ENCODE measurements at regions of chr2 and their contacts with region 1.

Region 1: GRCh38 chr2:95022309-95023221 is 2.9 kb upstream of the MAL start:
- DNase-seq: peak; percentile 78 to 92 (median 84)
- ATAC-seq: peak; percentile 71
- H3K4me3 ChIP-seq: no peak overlapping the region
- H3K4me3 Mint-ChIP-seq: peak overlapping the region; percentile 84
- H3K27ac ChIP-seq: no peak overlapping the region
- H3K27ac Mint-ChIP-seq: peak overlapping the region; percentile 77
- H3K4me1 ChIP-seq: peaks cover 50% of the 10 kb centered on the region
- H3K4me1 Mint-ChIP-seq: peaks cover 50% of the 10 kb centered on the region
- H3K27me3 ChIP-seq: no peaks in the 10 kb centered on the region
- H3K27me3 Mint-ChIP-seq: no peaks in the 10 kb centered on the region
- CTCF ChIP-seq: peak; percentile 90

Region 2: DNA sequence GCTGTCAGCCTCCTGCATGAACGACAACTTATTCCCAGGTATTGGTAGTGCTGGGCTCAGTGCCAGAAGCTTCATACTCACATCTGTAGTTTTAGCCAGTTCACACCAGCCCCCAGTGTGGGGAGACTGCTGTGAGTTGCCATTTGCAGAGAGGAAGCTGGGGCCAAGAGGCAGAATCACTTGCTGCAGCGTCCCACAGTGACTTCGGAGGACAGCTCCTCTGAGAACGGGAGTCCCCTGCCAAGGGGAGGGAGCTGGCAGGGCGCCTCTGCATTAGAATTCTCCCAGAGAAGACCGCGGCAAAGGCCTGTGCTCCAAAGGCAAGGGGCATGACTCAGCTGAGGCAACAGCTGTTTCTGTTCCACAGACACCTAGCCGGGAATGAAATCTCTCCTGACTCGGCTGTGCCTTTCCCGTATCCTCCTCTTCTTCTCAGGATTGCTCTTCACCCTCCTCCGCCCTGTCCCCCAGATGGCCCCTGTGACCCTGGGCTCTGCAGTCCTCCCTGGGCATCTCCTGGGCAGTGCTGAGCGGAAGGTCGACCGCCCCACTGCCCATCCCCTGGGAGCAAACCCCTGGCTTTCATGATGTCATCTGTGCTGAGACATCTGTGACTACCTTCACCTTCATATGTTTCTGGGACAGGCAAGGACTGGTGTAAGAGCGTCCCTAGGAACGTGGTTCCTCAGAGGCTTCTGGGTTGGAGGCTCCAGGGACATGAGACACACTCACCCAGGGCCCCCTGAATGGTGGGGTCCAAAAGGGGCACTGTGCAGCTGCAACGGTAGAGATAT is 20.9 kb after region 1 on chr2:
- CTCF ChIA-PET with region 1: interaction called, 9 read pairs
- POLR2A ChIA-PET with region 1: interaction called, 22 read pairs
- intact Hi-C with region 1: no loop called
- DNase-seq: peak in 2 of 14 experiments; percentile 23 to 32
- ATAC-seq: peak; percentile 51
- H3K4me3 ChIP-seq: no peak overlapping the region
- H3K4me3 Mint-ChIP-seq: no peak overlapping the region
- H3K27ac ChIP-seq: peak overlapping the region in 1 of 2 donors; percentile 14
- H3K27ac Mint-ChIP-seq: peak overlapping the region; percentile 71
- H3K4me1 ChIP-seq: peaks cover 63% of the 10 kb centered on the region
- H3K4me1 Mint-ChIP-seq: peaks cover 84% of the 10 kb centered on the region
- H3K27me3 ChIP-seq: no peaks in the 10 kb centered on the region
- H3K27me3 Mint-ChIP-seq: no peaks in the 10 kb centered on the region
- CTCF ChIP-seq: no peak

Region 3: DNA sequence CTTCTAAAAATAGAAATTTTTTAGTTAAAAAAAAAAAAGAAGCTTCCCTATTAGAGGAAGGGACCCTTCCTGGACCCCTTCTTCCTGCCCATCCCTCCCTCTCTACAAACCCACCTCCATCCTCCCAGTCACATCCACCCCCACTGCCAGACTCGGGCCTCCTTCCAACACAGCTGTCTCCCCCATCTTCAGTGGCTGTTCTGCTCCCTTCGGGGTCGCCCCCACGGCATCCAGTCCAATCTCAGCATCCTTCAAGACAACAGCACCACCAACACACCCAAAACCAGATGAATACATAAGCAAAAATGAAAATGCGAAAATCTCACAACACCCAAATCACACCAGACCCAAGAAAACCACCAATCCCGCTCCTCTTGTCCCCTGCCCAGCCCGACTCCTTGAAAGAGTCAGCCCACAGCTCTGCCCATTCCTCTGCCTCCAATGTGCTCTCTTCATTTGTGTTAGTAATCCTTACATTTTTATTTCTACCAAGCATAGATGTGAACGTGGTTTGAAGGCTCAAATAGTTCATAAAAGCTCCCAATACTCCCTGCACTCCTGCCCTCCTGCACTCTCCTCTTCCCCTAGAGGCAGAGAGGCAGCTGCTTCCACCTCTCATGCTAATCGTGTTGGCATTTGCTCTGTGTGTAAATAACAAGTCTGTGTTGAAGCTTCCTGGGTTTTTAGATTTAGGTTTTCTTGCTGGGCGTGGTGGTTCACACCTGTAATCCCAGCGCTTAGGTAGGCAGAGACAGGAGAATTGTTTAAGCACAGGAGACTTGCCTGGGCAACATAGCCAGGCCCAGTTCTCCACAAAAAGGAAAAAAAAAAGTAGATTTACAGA is 39.9 kb after region 1 on chr2:
- CTCF ChIA-PET with region 1: interaction called, 26 read pairs
- POLR2A ChIA-PET with region 1: interaction called, 77 read pairs
- intact Hi-C with region 1: loop called in 1 of 2 experiments (anchors 5 kb)
- DNase-seq: peak in 2 of 14 experiments; percentile 31 to 33
- ATAC-seq: peak; percentile 47
- H3K4me3 ChIP-seq: no peak overlapping the region
- H3K4me3 Mint-ChIP-seq: peak overlapping the region; percentile 56
- H3K27ac ChIP-seq: no peak overlapping the region
- H3K27ac Mint-ChIP-seq: peak overlapping the region; percentile 80
- H3K4me1 ChIP-seq: peaks cover 36% of the 10 kb centered on the region
- H3K4me1 Mint-ChIP-seq: peaks cover 42% of the 10 kb centered on the region
- H3K27me3 ChIP-seq: no peaks in the 10 kb centered on the region
- H3K27me3 Mint-ChIP-seq: no peaks in the 10 kb centered on the region
- CTCF ChIP-seq: no peak

Region 4: DNA sequence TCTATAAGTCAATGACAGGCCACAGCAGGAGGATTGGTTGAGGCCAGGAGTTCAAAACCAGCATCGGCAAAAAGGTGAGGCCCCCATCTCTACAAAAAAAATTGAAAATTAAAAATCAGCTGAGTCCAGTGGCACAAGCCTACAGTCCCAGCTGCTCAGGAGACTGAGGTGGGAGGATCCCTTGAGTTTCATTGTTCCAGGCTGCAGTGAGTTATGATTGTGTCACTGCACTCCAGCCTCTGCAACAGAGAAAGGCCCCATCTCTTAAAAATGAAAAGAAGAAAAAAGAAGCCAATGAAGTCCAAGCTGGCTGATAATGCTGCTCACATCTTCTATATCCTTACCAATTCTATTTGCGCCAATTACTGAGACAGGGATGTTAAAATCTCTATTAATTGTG is 59.9 kb after region 1 on chr2:
- CTCF ChIA-PET with region 1: interaction called, 223 read pairs
- POLR2A ChIA-PET with region 1: interaction called, 749 read pairs
- intact Hi-C with region 1: loop called (anchors 1 kb)
- DNase-seq: no peak
- ATAC-seq: no peak
- H3K4me3 ChIP-seq: no peak overlapping the region
- H3K4me3 Mint-ChIP-seq: no peak overlapping the region
- H3K27ac ChIP-seq: no peak overlapping the region
- H3K27ac Mint-ChIP-seq: peak overlapping the region; percentile 41
- H3K4me1 ChIP-seq: peaks cover 20% of the 10 kb centered on the region
- H3K4me1 Mint-ChIP-seq: peaks cover 25% of the 10 kb centered on the region
- H3K27me3 ChIP-seq: no peaks in the 10 kb centered on the region
- H3K27me3 Mint-ChIP-seq: no peaks in the 10 kb centered on the region
- CTCF ChIP-seq: no peak

Region 5: DNA sequence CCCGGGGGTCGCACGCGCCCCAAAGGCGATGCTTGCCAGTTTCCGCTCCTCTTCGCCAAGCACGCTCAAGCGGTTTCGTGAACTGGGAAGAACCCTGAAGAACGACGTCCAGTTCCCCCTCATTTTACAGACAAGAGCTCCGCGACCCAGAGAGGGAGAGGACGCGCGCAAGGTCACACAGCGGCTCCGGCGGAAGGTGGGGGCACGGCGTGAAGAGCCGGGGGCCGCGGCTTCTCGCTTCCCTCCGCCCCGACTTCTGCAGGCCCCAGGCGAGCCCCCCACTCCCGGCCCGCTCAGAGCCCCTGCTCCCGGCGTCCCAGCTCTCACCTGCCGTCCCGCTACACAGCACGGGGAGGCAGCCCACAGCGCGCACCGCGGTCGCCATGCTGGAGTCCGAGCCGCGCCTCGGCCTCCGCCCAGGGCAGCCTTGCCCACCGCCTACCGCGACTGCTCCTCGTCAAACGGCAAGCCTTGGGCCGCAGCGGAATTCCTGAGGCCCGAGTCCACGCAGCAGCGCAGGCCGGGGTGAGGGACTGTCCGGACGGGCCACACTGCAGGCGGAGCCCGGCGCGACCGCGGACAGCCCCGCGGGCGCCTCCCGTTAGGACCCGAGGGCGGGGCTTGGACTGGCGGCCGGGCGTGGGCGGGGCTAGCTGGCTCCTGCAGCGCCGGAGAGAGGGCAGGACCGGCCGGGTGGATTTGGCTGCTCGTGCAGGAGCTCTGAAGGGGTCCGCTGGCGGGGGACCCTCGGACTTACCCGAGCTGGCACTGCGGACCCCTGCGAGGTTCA is 99.0 kb after region 1 on chr2 and contains the start of gene MRPS5:
- CTCF ChIA-PET with region 1: interaction called, 85 read pairs
- POLR2A ChIA-PET with region 1: interaction called, 27 read pairs
- intact Hi-C with region 1: no loop called
- DNase-seq: peak; percentile 68 to 91 (median 82)
- ATAC-seq: peak; percentile 89
- H3K4me3 ChIP-seq: peak within 1 kb of the TSS; percentile 81
- H3K4me3 Mint-ChIP-seq: peak within 1 kb of the TSS; percentile 95
- H3K27ac ChIP-seq: peak within 1 kb of the TSS; percentile 59 to 74
- H3K27ac Mint-ChIP-seq: peak within 1 kb of the TSS; percentile 94
- H3K4me1 ChIP-seq: peaks cover 31% of the 10 kb centered on the region
- H3K4me1 Mint-ChIP-seq: peaks cover 52% of the 10 kb centered on the region
- H3K27me3 ChIP-seq: no peaks in the 10 kb centered on the region
- H3K27me3 Mint-ChIP-seq: no peaks in the 10 kb centered on the region
- CTCF ChIP-seq: no peak
- total RNA-seq, gene MRPS5: 15.3 to 16.3 TPM

Region 6: DNA sequence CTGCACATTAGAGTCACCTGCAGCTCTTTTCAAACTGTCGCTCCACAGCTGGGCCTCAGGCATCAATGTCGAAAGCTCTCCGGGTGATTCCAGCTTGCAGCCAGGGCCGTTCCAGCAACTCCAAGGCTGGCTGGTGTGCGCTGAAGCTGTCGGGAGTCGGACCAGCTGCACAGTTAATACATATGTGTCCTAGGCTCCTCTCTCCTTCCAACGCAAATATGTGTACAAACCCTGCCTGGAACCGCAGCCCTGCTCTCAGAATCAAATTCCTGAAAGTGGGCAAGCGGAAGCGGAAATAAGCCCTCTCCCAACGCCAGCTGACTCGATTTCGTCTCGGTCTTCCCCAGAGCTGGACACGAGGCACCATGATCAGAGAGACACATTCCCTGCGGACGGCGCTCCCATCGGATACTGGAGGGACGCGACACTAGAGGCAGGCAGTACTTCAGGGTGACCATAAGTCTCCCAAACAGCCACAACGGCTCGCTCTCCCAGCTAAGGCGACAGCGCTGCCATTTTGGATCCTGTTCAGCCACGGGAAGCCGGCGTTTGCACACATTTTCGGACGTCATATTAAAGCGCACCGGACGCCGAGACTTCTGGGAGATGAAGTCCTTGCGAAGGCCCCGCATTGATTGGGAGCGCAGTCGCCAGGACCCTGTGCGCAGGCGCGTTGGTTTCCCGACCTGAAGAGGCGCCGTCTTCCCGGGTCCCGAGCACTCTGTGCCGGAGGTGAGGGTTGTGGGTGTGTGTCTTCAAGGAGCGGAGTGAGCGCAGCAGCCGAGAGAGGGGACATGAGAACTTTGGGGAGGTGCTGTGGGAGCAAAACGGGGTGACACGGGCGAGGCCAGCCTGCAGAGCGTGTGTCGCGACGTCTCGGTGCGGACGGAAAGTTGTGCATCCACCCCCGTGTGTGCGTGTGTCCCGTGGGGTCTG is 142.8 kb after region 1 on chr2 and contains the start of gene ZNF2:
- CTCF ChIA-PET with region 1: no interaction called
- POLR2A ChIA-PET with region 1: interaction called, 21 read pairs
- intact Hi-C with region 1: loop called in 1 of 2 experiments (anchors 5 kb)
- DNase-seq: peak; percentile 91 to 99 (median 96)
- ATAC-seq: peak; percentile 92
- H3K4me3 ChIP-seq: peak within 1 kb of the TSS; percentile 97
- H3K4me3 Mint-ChIP-seq: peak within 1 kb of the TSS; percentile 97
- H3K27ac ChIP-seq: peak within 1 kb of the TSS; percentile 86 to 92
- H3K27ac Mint-ChIP-seq: peak within 1 kb of the TSS; percentile 96
- H3K4me1 ChIP-seq: peaks cover 15% of the 10 kb centered on the region
- H3K4me1 Mint-ChIP-seq: peaks cover 36% of the 10 kb centered on the region
- H3K27me3 ChIP-seq: no peaks in the 10 kb centered on the region
- H3K27me3 Mint-ChIP-seq: no peaks in the 10 kb centered on the region
- CTCF ChIP-seq: no peak
- total RNA-seq, gene ZNF2: 0.53 TPM in 1 of 2 experiments, not detected in the other

Measured in CD4-positive, alpha-beta T cell (primary cell).